Heart right ventricle (tissue), 16 donors: ENCODE measurements at regions of chr13 and their contacts with region 1.

Region 1: DNA sequence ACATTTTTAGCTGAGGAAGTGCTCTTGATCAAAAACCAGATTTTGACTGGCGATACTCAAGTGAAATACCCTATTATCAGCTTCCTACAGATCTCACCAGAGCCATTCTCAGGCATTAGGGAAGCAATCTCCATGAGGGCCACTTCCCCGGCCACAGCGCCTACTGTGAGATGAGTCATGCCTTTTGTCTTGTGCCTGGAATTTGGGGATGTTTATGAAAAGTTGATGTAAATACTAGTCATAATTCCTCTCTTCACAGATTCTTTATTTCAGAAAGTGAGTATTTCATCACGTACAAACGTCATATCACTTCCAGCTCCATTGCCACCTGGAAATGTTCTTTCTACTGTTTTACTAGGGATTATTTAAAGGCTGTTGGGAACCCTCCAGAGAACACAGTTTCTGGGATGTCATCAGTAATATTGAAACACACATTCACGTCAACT is 25.3 kb upstream of the SLC46A3 start:
- DNase-seq: peak in 1 of 2 donors; percentile 11
- ATAC-seq: peak in 6 of 8 donors; percentile 32 to 82 (median 60)
- H3K4me3 ChIP-seq: no peak overlapping the region
- H3K27ac ChIP-seq: peak overlapping the region in 4 of 10 donors; percentile 15 to 85 (median 37)
- H3K4me1 ChIP-seq: peaks cover 0 to 18% (median 0%) of the 10 kb centered on the region in 9 donors
- H3K27me3 ChIP-seq: no peaks in the 10 kb centered on the region
- CTCF ChIP-seq: no peak

Region 2: DNA sequence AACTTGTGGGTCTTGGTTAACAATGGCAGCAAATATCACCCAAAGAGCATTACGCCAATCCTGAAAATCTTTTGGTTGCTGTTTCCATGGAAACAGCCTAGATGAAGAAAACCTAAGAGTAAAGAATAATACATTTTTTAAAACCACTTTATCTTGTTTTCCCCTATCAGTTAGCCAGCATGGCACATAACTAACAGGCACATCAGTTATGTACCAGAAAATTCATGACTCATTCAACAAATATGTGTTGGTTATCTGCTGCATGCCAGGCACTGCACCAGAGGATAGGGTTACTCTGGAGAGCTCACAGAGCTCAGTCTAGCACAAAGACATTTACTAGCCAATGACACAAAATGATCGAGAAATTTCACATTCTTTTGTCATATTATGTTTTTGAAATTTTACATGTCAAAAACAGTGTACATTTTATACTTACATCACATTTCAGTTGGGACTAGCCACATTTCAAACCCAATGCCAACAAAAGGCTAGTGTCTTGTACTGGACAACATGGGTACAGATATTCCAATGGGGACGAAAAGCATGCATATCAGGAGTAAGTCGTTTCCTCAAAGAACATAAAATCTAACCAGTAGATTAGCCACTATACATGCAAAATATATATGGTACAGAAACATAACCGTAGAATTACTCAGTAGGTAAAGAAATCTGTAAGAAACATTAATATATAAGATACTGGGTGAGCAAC is 1144.1 kb before region 1 on chr13:
- intact Hi-C with region 1: no loop called
- DNase-seq: no peak
- ATAC-seq: peak; percentile 46 to 96 (median 87)
- H3K4me3 ChIP-seq: no peak overlapping the region
- H3K27ac ChIP-seq: peak overlapping the region in 6 of 10 donors; percentile 42 to 69 (median 62)
- H3K4me1 ChIP-seq: peaks cover under 1 to 58% (median 20%) of the 10 kb centered on the region in 9 donors
- H3K27me3 ChIP-seq: no peaks in the 10 kb centered on the region
- CTCF ChIP-seq: no peak

Region 3: GRCh38 chr13:28574617-28575142 is 169.4 kb before region 1 on chr13:
- intact Hi-C with region 1: no loop called
- DNase-seq: peak in 1 of 2 donors; percentile 7
- ATAC-seq: peak in 6 of 8 donors; percentile 57 to 89 (median 76)
- H3K4me3 ChIP-seq: no peak overlapping the region
- H3K27ac ChIP-seq: peak overlapping the region in 1 of 10 donors; percentile 55
- H3K4me1 ChIP-seq: peaks cover 0 to 15% (median 0%) of the 10 kb centered on the region in 9 donors
- H3K27me3 ChIP-seq: peaks cover 0 to 10% (median 0%) of the 10 kb centered on the region in 7 donors
- CTCF ChIP-seq: no peak

Region 4: GRCh38 chr13:28872427-28873176 is 128.5 kb after region 1 on chr13:
- intact Hi-C with region 1: no loop called
- DNase-seq: no peak
- ATAC-seq: no peak
- H3K4me3 ChIP-seq: no peak overlapping the region
- H3K27ac ChIP-seq: no peak overlapping the region
- H3K4me1 ChIP-seq: peaks cover 0 to 9% (median 0%) of the 10 kb centered on the region in 9 donors
- H3K27me3 ChIP-seq: no peaks in the 10 kb centered on the region
- CTCF ChIP-seq: no peak

Region 5: GRCh38 chr13:29020314-29020713 is 276.2 kb after region 1 on chr13:
- intact Hi-C with region 1: loop called in 1 of 10 experiments (anchors 10 kb)
- DNase-seq: no peak
- ATAC-seq: no peak
- H3K4me3 ChIP-seq: no peak overlapping the region
- H3K27ac ChIP-seq: no peak overlapping the region
- H3K4me1 ChIP-seq: no peaks in the 10 kb centered on the region
- H3K27me3 ChIP-seq: no peaks in the 10 kb centered on the region
- CTCF ChIP-seq: no peak